RWPE1 (cell line): ENCODE measurements at regions of chr22 and their contacts with region 1.

Region 1: DNA sequence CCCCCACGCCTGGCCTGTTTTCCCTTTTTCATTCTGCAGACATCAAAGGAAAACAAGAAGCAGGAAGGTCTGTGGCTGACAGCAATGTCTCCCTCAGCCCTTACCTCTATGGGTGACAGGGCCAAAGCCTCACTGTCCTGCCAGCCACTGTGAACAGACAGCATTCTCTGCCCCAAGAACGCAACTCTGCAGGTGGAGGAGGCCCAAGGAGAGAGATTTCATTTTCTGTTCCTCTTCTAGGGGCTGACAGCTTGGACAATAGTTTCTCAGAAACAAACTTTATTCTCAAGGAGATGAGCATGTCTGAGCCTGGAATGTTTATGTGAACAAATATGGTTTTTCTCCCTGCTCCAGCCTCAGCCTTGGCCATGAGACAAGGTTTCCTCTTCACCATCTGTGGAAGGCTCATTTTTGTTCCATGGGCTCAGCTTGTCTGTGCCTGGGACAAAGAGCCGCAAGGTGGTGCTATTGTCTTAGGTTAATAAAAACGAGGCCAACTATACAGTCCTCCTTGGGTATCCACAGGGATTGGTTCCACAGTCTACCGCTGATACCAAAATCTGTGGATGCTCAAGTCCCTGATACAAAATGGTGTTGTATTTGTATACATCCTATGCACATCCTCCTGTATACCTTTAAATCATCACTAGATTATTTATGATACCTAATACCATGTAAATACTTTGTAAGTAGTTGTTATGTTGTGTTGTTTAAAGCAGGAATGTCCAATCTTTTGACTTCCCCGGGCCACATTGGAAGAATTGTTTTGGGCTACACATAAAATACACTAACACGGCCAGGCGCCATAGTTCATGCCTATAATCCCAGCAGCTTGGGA is 5.8 kb downstream of the PIWIL3 start:
- DNase-seq: peak; percentile 34
- H3K27ac ChIP-seq: no peak overlapping the region
- CTCF ChIP-seq: peak; percentile 75

Region 2: DNA sequence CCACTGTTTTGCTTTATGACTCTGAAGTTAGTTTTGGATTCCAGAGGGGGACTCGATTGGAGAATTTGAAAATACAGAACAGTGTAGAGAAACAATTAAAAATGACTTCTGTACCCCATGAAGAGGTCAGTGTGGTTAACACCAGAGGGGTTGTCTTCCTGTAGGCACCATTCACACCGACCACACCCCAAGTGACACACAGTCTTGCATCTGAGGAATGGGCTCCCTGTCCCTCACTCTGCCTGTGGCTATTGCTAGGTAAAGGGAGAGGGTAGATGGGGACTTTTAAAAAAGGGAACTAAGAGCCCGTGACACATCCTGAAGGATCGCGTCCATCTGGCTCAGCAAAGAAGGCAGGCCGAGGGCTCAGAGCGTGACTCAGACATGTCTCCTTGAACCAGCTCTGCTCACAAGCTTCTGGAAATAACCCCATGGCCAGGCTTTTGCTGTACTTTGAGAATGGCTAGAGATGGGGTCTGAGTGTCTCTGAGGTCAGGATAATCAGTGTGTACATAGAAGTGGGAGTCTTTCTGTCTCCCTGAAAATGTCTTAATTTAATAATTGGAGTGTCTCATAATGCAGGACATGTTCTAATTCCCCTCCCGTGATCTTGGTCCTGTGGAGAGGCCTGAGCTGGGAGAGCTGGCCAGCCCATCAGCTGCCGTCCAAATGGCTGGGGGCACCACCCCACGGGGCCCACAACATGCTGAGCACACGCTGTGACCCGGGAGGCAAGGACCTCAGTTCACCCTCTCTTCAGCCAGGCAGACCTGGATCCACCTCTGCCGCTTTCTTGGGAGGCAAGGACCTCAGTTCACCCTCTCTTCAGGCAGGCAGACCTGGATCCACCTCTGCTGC is 76.5 kb after region 1 on chr22:
- CTCF ChIA-PET with region 1: interaction called, 10 read pairs
- POLR2A ChIA-PET with region 1: no interaction called
- DNase-seq: peak; percentile 35
- H3K27ac ChIP-seq: no peak overlapping the region
- CTCF ChIP-seq: no peak

Region 3: GRCh38 chr22:25219948-25220442 is 451.2 kb after region 1 on chr22:
- CTCF ChIA-PET with region 1: no interaction called
- POLR2A ChIA-PET with region 1: no interaction called
- DNase-seq: no peak
- H3K27ac ChIP-seq: no peak overlapping the region
- CTCF ChIP-seq: no peak